Posterior cingulate gyrus (tissue), 11 donors: ENCODE measurements at regions of chr7 and their contacts with region 1.

Region 1: DNA sequence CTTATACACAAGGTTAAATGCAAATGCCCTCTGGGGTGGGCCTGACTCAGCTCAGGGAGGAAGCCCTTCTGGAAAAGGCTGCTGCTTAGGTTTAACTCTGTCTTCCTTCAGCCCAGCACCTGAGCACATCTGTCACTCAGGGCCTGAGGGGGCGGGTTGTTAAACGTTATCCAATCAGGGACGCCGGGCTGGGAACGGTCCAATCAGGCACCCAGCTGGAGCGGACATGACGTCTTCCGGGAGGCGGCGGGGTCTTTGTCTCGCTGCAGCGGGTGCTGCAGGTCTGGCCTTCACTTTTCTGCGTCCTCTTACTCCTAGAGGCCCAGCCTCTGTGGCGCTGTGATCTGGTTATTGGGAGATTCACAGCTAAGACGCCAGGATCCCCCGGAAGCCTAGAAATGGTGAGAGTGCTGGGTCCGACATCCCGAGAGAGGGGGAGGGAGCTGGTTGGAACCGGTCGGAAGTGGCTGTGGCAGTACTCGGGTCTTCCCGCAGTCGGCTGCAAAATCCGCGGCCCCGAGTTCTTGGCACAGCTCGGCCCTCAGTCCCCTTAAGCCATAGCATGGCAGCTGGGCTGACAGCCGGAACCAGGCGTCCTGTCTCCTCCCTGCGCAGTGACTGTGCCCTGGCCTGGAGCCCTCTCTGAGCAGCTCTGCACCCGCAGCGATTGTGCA is at the start of gene ZNF138:
- DNase-seq: peak; percentile 92 to 100 (median 97)

Region 2: DNA sequence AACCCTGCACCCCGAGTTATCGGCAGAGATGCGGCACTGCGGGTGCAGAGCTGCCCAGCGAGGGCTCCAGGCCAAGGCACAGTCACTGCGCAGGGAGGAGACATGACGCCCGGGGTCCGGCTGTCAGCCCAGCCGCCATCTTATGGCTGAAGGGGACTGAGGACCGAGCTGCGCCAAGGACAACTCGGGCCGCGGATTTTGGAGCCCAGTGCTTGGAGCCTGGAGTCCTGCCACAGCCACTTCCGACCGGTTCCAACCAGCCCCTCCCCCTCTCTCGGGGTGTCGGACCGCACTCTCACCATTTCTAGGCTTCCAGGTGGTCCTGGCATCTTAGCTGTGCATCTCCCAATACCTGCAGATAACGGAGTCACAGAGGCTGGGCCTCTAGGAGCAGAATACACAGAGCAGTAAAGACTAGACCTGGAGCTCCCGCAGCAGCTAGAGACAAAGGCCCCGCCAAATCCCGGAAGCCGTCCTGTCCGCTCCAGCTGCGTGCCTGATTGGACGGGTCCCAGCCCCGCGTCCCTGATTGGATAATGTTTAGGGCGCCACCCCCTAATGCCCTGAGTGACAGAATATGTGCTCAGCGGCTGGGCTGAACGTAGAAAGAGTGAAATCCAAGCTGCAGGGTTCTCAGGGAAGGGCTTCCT is 231.6 kb before region 1 on chr7 and contains the start of gene ZNF680:
- intact Hi-C with region 1: loop called (anchors 5 kb)
- DNase-seq: peak; percentile 95 to 99 (median 97)

Region 3: DNA sequence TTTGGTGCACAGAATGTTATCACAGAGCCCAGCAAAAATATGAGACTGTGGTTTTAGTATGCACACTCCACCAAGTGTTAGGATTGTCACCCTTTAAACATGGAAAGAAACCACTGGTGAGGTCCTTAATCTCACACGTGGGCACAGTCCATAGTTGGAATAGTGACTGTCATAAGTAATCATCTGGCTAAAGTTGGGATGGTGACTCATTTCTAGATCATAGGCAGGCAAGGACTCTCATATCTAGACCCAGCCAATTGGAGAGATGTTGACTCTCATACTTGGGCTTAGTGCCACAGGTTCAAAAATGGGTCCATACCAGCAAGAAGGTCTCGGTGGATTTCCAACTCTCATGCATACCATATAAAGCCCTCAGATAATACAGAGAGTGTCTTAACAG is 191.8 kb before region 1 on chr7:
- intact Hi-C with region 1: no loop called
- DNase-seq: no peak

Region 4: DNA sequence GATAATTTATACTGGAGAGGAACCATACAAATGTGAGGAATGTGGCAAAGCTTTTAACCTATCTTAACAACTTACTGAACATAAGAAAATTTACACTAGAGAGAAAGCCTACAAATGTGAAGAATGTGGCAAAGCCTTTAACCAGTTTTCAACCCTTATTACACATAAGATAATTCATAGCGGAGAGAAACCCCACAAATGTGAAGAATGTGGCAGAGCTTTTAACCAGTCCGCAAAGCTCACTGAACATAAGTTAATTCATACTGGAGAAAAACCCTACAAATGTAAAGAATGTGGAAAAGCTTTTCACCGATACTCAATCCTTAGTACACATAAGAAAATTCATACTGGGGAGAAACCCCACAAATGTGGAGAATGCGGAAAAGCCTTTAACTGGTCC is 37.8 kb after region 1 on chr7:
- intact Hi-C with region 1: no loop called
- DNase-seq: no peak